ENCODE measurements at regions of chr10 and their contacts with region 1.

Region 1: GRCh38 chr10:67697724-67698131 is 1.7 kb upstream of the CTNNA3 start:
- DNase-seq: no peak
- ATAC-seq: peak; percentile 77
- H3K4me3 Mint-ChIP-seq: no peak overlapping the region
- H3K27ac Mint-ChIP-seq: no peak overlapping the region
- H3K4me1 Mint-ChIP-seq: no peaks in the 10 kb centered on the region
- H3K27me3 Mint-ChIP-seq: peaks cover 33% of the 10 kb centered on the region
- CTCF ChIP-seq: no peak

Region 2: GRCh38 chr10:67722113-67722512 is 24.4 kb after region 1 on chr10:
- CTCF ChIA-PET with region 1: interaction called, 18 read pairs
- POLR2A ChIA-PET with region 1: no interaction called
- intact Hi-C with region 1: no loop called
- DNase-seq: no peak
- ATAC-seq: peak; percentile 54
- H3K4me3 Mint-ChIP-seq: no peak overlapping the region
- H3K27ac Mint-ChIP-seq: no peak overlapping the region
- H3K4me1 Mint-ChIP-seq: peaks cover 5% of the 10 kb centered on the region
- H3K27me3 Mint-ChIP-seq: peaks cover 3% of the 10 kb centered on the region
- CTCF ChIP-seq: no peak

Region 3: GRCh38 chr10:67779465-67780203 is 81.9 kb after region 1 on chr10:
- CTCF ChIA-PET with region 1: interaction called, 398 read pairs
- POLR2A ChIA-PET with region 1: interaction called, 10 read pairs
- intact Hi-C with region 1: loop called (anchors 1 kb)
- DNase-seq: no peak
- ATAC-seq: peak; percentile 83
- H3K4me3 Mint-ChIP-seq: no peak overlapping the region
- H3K27ac Mint-ChIP-seq: peak overlapping the region; percentile 0
- H3K4me1 Mint-ChIP-seq: peaks cover 36% of the 10 kb centered on the region
- H3K27me3 Mint-ChIP-seq: no peaks in the 10 kb centered on the region
- CTCF ChIP-seq: no peak

Region 4: GRCh38 chr10:68156373-68157185 is 458.9 kb after region 1 on chr10:
- CTCF ChIA-PET with region 1: interaction called, 3 read pairs
- POLR2A ChIA-PET with region 1: no interaction called
- intact Hi-C with region 1: loop called (anchors 1 kb)
- DNase-seq: no peak
- ATAC-seq: peak; percentile 61
- H3K4me3 Mint-ChIP-seq: no peak overlapping the region
- H3K27ac Mint-ChIP-seq: no peak overlapping the region
- H3K4me1 Mint-ChIP-seq: no peaks in the 10 kb centered on the region
- H3K27me3 Mint-ChIP-seq: peaks cover 5% of the 10 kb centered on the region
- CTCF ChIP-seq: no peak

Measured in activated B cell treated with CpG ODN at 0.5 μM for 24 hours (primary cell).